Activated naive CD4-positive, alpha-beta T cell treated with anti-CD3 and anti-CD28 coated beads for 36 hours (primary cell): ENCODE measurements at regions of chr14 and their contacts with region 1.

Region 1: DNA sequence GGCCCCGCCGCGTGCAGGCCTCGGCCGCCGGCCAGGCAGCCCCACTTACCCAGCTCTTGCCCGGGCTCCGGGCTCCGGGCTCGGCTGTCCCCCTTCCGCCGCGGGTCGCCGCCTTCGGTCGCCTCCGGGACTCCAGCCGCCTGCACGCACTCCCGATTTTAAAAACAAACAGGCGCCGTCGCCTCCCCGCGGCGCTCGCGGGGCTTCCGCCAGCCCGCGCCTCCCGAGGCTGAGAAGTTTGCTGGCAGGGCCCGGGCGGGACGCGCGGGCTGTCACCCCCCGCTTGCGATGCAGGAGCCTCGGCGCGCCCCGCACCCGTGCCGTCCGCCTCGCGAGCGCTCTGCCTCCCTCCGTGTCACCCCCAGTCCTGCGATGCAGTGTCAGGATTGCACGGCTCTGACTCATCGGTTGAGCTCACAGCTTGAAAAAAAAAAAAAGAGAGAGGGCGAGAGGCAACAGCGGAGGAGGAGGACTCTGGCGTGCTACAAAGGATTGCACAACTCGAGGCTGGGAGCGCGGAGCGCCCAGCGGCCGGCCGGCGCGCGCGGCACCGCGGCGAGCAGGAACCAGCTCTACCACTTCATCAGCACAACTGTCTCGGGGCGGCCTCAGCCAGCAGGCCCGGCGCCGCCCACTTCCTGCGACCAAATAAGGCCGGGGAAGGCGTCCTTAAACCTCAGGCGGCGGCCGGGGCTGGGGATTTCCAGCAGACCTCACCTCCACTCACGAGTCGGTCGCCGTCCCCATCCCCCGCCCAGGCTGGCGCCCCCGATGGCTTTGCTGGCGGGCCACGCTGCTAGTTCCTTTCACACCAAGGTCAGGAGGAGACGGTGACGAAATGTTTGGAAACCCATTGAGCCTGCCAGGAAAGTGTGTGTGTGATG is 45.8 kb upstream of the PNMA1 start:
- DNase-seq: peak; percentile 97
- H3K4me3 Mint-ChIP-seq: peak overlapping the region; percentile 89
- H3K27ac Mint-ChIP-seq: peak overlapping the region; percentile 99
- H3K4me1 Mint-ChIP-seq: peaks cover 74% of the 10 kb centered on the region
- H3K27me3 Mint-ChIP-seq: no peaks in the 10 kb centered on the region

Region 2: DNA sequence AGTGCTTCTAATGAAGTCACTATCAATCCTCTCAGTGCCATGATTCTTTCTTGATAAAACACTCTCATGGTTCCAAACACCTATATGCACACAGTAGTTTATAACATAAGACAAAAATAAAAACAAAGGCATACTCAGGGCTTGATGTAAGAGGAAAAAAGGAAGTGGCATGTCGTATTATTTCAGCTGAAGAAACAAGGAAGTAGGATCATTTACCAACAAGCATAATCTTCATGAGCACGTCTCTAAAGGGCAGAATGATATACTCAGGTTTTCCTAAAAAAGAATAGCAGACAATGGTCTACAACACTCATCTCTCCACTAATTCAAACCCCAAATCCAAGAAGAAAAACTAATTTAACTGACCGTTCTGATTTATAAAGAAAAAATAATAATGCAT is 335.5 kb before region 1 on chr14:
- CTCF ChIA-PET with region 1: no interaction called
- intact Hi-C with region 1: no loop called
- DNase-seq: no peak
- H3K4me3 Mint-ChIP-seq: no peak overlapping the region
- H3K27ac Mint-ChIP-seq: no peak overlapping the region
- H3K4me1 Mint-ChIP-seq: peaks cover 30% of the 10 kb centered on the region
- H3K27me3 Mint-ChIP-seq: no peaks in the 10 kb centered on the region

Region 3: DNA sequence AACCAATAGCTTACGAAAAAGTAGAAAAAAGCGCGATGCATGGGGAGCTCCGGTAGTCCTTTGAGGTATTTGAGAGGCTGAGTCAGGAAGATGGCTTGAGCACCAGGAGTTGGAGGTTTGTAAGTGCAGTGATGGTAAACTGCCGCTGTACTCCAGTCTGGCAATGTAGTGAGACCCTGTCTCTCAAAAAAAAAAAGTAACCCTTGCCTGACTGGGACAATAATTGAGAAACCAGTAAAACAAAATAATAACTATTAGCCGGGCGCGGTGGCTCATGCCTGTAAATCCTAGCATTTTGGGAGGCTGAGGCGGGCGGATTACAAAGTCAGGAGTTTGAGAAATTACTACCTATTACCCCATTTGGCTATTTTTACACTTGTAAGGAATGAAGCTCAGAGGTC is 191.6 kb before region 1 on chr14:
- CTCF ChIA-PET with region 1: interaction called, 5 read pairs
- intact Hi-C with region 1: loop called (anchors 2 kb)
- DNase-seq: peak; percentile 69
- H3K4me3 Mint-ChIP-seq: peak overlapping the region; percentile 83
- H3K27ac Mint-ChIP-seq: peak overlapping the region; percentile 95
- H3K4me1 Mint-ChIP-seq: peaks cover 46% of the 10 kb centered on the region
- H3K27me3 Mint-ChIP-seq: no peaks in the 10 kb centered on the region

Region 4: DNA sequence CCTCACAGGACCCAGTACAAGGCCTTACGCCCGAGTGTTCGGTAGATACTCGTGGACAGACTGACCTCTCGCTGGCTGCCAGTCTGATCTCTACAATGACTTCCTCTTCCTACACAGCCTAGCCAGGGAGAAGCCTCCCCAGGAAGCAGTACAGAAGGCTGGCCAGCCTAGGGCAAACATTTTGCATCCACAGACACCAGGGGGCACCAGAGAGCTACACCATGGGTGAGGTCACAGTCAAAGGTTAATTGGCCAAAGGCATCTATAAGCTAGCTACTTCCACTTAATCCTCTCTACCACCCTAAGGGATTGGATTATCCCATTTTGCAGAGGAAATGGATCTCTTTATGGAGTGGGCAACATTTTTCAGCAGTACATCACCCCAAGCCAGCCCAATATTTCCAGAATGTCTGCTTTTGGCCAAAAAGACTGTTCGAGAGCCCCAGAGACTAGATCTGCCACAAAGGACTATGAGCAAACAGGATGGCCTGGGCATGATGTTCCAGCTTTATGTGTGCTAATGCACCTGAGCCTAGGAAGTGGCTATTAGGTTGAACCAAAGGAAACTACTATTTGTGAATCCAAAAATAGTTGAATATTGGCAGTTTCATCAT is 31.1 kb before region 1 on chr14:
- CTCF ChIA-PET with region 1: interaction called, 91 read pairs
- intact Hi-C with region 1: loop called (anchors 1 kb)
- DNase-seq: peak; percentile 94
- H3K4me3 Mint-ChIP-seq: no peak overlapping the region
- H3K27ac Mint-ChIP-seq: peak overlapping the region; percentile 74
- H3K4me1 Mint-ChIP-seq: peaks cover 24% of the 10 kb centered on the region
- H3K27me3 Mint-ChIP-seq: no peaks in the 10 kb centered on the region

Region 5: DNA sequence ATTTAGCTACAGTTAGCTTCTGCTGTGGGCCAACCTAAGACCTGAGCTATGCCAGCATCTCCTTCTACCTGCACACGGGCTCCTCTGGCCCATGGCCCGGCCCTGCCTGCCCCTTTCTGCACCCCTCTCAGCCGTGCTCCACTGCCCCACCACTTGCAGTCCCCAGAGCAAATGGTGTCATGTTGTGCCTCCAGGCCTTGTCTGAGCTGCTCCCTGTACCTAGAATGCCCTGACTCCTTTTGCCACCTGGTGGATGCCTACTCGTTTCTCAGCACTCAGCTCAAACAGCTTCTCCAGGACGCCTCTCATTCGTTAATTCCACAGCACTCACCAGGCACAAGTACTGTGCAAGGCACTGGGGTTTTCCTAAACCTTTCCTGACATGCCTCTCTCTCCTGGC is 17.4 kb after region 1 on chr14:
- CTCF ChIA-PET with region 1: interaction called, 45 read pairs
- intact Hi-C with region 1: no loop called
- DNase-seq: peak; percentile 53
- H3K4me3 Mint-ChIP-seq: no peak overlapping the region
- H3K27ac Mint-ChIP-seq: peak overlapping the region; percentile 6
- H3K4me1 Mint-ChIP-seq: peaks cover 56% of the 10 kb centered on the region
- H3K27me3 Mint-ChIP-seq: no peaks in the 10 kb centered on the region

Region 6: GRCh38 chr14:73886449-73887317 is 126.7 kb after region 1 on chr14 and contains the start of gene ZNF410:
- CTCF ChIA-PET with region 1: no interaction called
- intact Hi-C with region 1: loop called (anchors 2 kb)
- DNase-seq: peak; percentile 95
- H3K4me3 Mint-ChIP-seq: peak within 1 kb of the TSS; percentile 88
- H3K27ac Mint-ChIP-seq: peak within 1 kb of the TSS; percentile 94
- H3K4me1 Mint-ChIP-seq: peaks cover 46% of the 10 kb centered on the region
- H3K27me3 Mint-ChIP-seq: no peaks in the 10 kb centered on the region
- total RNA-seq, gene ZNF410: 51.0 to 56.8 TPM

Region 7: DNA sequence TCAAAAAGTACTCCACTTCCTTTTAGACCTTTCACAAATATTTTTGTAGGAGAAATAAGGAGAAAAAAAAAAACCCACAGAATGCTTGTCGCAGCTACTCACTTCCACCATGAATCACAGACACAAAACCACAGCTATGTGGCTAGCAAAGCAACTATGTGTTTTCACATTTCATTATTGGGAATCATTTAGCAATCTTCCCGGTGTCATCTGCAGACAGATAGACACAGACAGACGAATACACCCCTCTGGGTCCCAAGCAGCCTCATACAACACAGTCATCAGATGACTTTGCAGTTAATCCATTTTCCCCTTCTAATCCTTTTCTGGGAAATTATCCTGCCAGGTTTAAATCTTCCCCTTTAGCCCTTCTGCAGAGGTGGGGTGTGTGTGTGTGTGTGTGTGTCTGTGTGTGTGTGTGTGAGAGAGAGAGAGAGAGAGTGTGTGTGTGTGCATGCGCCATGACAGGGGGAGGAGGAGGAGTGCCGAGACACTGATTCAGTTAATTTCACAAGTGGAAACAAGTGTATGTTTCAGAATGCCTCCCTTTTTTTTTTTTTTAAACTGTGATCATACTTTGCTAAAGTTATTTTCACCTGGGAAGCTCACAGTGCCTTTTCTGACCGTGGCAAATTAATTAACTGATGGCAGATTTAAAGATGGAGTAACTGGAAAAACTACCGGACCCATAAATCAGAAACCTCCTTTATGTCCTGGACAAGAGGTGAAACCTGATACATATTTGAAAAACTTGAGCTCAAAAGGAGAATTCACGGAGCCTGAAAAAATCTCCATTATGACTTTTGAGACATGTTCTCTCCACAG is 812.2 kb after region 1 on chr14:
- CTCF ChIA-PET with region 1: no interaction called
- intact Hi-C with region 1: loop called (anchors 5 kb)
- DNase-seq: peak; percentile 54
- H3K4me3 Mint-ChIP-seq: peak overlapping the region; percentile 39
- H3K27ac Mint-ChIP-seq: peak overlapping the region; percentile 87
- H3K4me1 Mint-ChIP-seq: peaks cover 26% of the 10 kb centered on the region
- H3K27me3 Mint-ChIP-seq: peaks cover 11% of the 10 kb centered on the region